Activated CD4-positive, alpha-beta T cell treated with anti-CD3 and anti-CD28 coated beads, Interleukin-2, amount 10 ng/mL, durations not matched to agents 24 days and 14 days (primary cell): ENCODE measurements at regions of chr6 and their contacts with region 1.

Region 1: GRCh38 chr6:97497713-97498331 is 214.8 kb upstream of the MMS22L start:
- DNase-seq: peak; percentile 86
- H3K4me3 Mint-ChIP-seq: no peak overlapping the region
- H3K27ac Mint-ChIP-seq: no peak overlapping the region
- H3K4me1 Mint-ChIP-seq: no peaks in the 10 kb centered on the region
- H3K27me3 Mint-ChIP-seq: peaks cover 4% of the 10 kb centered on the region

Region 2: GRCh38 chr6:97437087-97437486 is 60.7 kb before region 1 on chr6:
- intact Hi-C with region 1: no loop called
- DNase-seq: no peak
- H3K4me3 Mint-ChIP-seq: no peak overlapping the region
- H3K27ac Mint-ChIP-seq: no peak overlapping the region
- H3K4me1 Mint-ChIP-seq: no peaks in the 10 kb centered on the region
- H3K27me3 Mint-ChIP-seq: peaks cover 5% of the 10 kb centered on the region

Region 3: GRCh38 chr6:99119109-99120031 is 1621.5 kb after region 1 on chr6:
- intact Hi-C with region 1: loop called (anchors 1 kb)
- DNase-seq: peak; percentile 76
- H3K4me3 Mint-ChIP-seq: no peak overlapping the region
- H3K27ac Mint-ChIP-seq: no peak overlapping the region
- H3K4me1 Mint-ChIP-seq: no peaks in the 10 kb centered on the region
- H3K27me3 Mint-ChIP-seq: peaks cover 14% of the 10 kb centered on the region